Naive thymus-derived CD4-positive, alpha-beta T cell (primary cell): ENCODE measurements at regions of chr9 and their contacts with region 1.

Region 1: DNA sequence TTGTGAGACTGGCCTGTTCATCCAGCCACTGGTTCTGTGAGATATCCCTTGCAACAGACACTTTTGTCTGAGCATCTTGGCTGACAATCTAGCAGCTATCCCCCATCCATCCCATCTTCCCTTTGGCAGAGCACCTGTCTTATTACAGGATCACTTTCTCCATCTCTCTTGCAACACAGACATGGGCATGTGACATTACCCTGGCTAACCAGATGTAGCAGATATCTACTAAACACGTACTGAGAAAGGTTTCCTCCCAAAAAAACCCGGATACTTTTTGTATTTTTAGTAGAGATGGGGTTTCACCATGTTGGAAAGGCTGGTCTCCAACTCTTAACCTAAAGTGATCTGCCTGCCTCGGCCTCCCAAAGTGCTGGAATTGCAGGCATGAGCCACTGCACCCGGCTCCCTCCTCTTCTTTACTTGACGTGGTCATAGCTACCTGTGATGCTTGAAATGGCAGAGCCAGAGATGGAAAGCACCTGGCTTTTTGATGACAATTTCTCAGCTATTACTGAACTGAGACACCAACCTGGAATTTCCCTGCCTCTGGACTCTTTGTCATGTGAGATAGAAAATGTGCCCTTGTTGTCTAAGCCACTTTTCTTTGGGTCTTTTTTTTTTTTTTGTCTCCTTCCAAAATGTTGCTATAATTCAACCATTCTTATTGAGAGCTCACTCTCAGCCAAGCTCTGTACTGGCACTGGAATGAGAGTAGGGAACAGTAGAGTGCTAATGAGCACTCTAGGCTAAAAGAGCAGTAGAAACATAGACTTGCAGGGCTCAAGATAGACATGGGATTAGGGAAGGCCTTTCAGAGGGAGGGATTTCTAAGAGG is 32.6 kb downstream of the FNBP1 start:
- DNase-seq: peak in 3 of 9 donors; percentile 28 to 85 (median 59)
- ATAC-seq: peak; percentile 83
- H3K4me3 ChIP-seq: no peak overlapping the region
- H3K4me3 Mint-ChIP-seq: peak overlapping the region; percentile 15 to 76 (median 42)
- H3K27ac ChIP-seq: peak overlapping the region; percentile 76
- H3K27ac Mint-ChIP-seq: peak overlapping the region; percentile 78 to 96 (median 86)
- H3K4me1 ChIP-seq: peaks cover 33 to 49% of the 10 kb centered on the region in 2 donors
- H3K4me1 Mint-ChIP-seq: peaks cover 55 to 93% (median 72%) of the 10 kb centered on the region in 7 donors
- H3K27me3 ChIP-seq: no peaks in the 10 kb centered on the region
- H3K27me3 Mint-ChIP-seq: no peaks in the 10 kb centered on the region

Region 2: GRCh38 chr9:129962889-129963703 is 47.3 kb before region 1 on chr9:
- CTCF ChIA-PET with region 1: no interaction called
- POLR2A ChIA-PET with region 1: no interaction called
- intact Hi-C with region 1: loop called in 1 of 2 experiments (anchors 1 kb)
- DNase-seq: peak; percentile 23 to 92 (median 87)
- ATAC-seq: peak; percentile 98
- H3K4me3 ChIP-seq: peak overlapping the region; percentile 80
- H3K4me3 Mint-ChIP-seq: peak overlapping the region; percentile 66 to 95 (median 88)
- H3K27ac ChIP-seq: peak overlapping the region; percentile 92
- H3K27ac Mint-ChIP-seq: peak overlapping the region; percentile 89 to 99 (median 97)
- H3K4me1 ChIP-seq: peaks cover 34 to 47% of the 10 kb centered on the region in 2 donors
- H3K4me1 Mint-ChIP-seq: peaks cover 54 to 80% (median 67%) of the 10 kb centered on the region in 7 donors
- H3K27me3 ChIP-seq: no peaks in the 10 kb centered on the region
- H3K27me3 Mint-ChIP-seq: no peaks in the 10 kb centered on the region

Region 3: GRCh38 chr9:129988607-129989361 is 21.6 kb before region 1 on chr9:
- CTCF ChIA-PET with region 1: interaction called, 3 read pairs
- POLR2A ChIA-PET with region 1: interaction called, 4 read pairs
- intact Hi-C with region 1: loop called in 1 of 2 experiments (anchors 2 kb)
- DNase-seq: peak in 4 of 9 donors; percentile 25 to 58 (median 29)
- ATAC-seq: peak; percentile 67
- H3K4me3 ChIP-seq: no peak overlapping the region
- H3K4me3 Mint-ChIP-seq: peak overlapping the region; percentile 18 to 85 (median 48)
- H3K27ac ChIP-seq: peak overlapping the region; percentile 76
- H3K27ac Mint-ChIP-seq: peak overlapping the region; percentile 54 to 98 (median 92)
- H3K4me1 ChIP-seq: peaks cover 43 to 48% of the 10 kb centered on the region in 2 donors
- H3K4me1 Mint-ChIP-seq: peaks cover 44 to 83% (median 73%) of the 10 kb centered on the region in 7 donors
- H3K27me3 ChIP-seq: no peaks in the 10 kb centered on the region
- H3K27me3 Mint-ChIP-seq: no peaks in the 10 kb centered on the region

Region 4: DNA sequence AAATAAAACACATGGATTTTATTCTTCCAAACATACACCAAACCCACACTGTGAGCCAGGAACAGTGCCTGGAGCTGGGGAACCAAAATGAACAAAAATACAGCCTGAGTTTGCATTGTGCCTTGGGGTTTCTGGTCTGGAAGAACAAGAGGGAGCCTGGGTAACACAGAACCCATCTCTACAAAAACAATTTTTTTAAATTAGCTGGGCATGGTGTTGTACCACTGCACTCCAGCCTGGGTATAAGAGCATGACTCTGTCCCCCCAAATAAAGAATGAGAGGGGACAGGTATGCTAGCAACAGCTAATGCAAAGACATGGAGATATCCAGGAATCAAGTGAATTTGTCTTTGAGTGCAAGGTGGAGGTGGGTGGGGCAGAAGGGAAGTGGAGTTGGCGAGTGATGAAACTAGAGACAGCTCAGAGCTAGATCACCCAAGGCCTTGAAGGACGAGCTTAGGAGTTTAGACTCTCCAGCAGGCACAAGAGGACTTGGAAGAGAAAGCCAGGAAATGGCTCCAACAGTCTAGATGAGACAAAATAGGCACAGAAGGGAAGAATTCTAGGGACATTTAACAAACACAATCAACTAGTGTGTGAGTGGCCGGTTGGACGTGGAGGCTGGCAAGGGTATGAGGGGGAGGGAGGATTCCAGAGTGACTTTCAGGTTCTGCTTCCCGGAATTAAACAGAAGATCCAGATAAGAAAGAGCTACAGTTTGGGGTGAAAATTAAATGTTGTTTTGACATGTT is 14.8 kb before region 1 on chr9:
- CTCF ChIA-PET with region 1: no interaction called
- POLR2A ChIA-PET with region 1: interaction called, 6 read pairs
- intact Hi-C with region 1: loop called (anchors 1 to 2 kb)
- DNase-seq: no peak
- ATAC-seq: peak; percentile 67
- H3K4me3 ChIP-seq: no peak overlapping the region
- H3K4me3 Mint-ChIP-seq: peak overlapping the region; percentile 41 to 86 (median 74)
- H3K27ac ChIP-seq: peak overlapping the region; percentile 61
- H3K27ac Mint-ChIP-seq: peak overlapping the region; percentile 89 to 98 (median 94)
- H3K4me1 ChIP-seq: peaks cover 53 to 65% of the 10 kb centered on the region in 2 donors
- H3K4me1 Mint-ChIP-seq: peaks cover 48 to 83% (median 77%) of the 10 kb centered on the region in 7 donors
- H3K27me3 ChIP-seq: no peaks in the 10 kb centered on the region
- H3K27me3 Mint-ChIP-seq: no peaks in the 10 kb centered on the region

Region 5: GRCh38 chr9:130020618-130021017 is 10.2 kb after region 1 on chr9:
- CTCF ChIA-PET with region 1: no interaction called
- POLR2A ChIA-PET with region 1: interaction called, 3 read pairs
- intact Hi-C with region 1: loop called in 1 of 2 experiments (anchors 1 kb)
- DNase-seq: no peak
- ATAC-seq: no peak
- H3K4me3 ChIP-seq: no peak overlapping the region
- H3K4me3 Mint-ChIP-seq: peak overlapping the region in 8 of 10 donors; percentile 3 to 62 (median 40)
- H3K27ac ChIP-seq: no peak overlapping the region
- H3K27ac Mint-ChIP-seq: peak overlapping the region; percentile 36 to 82 (median 79)
- H3K4me1 ChIP-seq: peaks cover 32 to 59% of the 10 kb centered on the region in 2 donors
- H3K4me1 Mint-ChIP-seq: peaks cover 33 to 84% (median 73%) of the 10 kb centered on the region in 7 donors
- H3K27me3 ChIP-seq: no peaks in the 10 kb centered on the region
- H3K27me3 Mint-ChIP-seq: no peaks in the 10 kb centered on the region

Region 6: DNA sequence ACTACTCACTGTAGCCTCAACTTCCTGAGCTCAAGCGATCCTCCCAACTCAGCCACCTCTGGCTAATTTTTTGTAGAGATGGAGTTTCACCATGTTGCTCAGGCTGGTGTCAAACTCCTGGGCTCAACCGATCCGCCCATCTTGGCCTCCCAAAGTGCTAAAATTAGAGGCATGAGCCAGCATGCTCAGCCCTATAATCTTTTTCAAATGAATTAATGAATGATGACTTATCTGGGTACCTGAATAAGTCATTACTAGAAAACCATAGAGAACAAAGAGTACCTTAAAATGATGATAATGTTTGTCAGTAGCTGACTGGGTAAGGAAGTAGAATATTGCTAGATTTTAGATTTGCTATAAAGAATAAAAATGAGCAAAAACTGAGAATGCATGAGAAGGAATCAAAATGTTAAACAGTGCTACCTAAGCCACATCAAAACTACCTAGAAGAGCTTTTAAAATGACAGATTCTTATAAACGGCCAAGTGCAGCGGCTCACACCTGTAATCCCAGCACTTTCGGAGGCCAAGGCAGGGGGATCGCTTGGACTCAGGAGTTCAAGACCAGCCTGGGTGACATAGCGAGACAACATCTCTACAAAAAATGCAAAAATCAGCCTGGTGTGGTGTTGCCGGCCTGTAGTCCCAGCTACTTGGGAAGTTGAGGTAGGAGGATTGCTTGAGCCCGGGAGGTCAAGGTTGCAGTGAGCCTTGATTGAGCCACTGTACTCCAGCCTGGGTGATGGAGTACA is 19.0 kb after region 1 on chr9:
- CTCF ChIA-PET with region 1: no interaction called
- POLR2A ChIA-PET with region 1: interaction called, 8 read pairs
- intact Hi-C with region 1: loop called in 1 of 2 experiments (anchors 2 kb)
- DNase-seq: no peak
- ATAC-seq: no peak
- H3K4me3 ChIP-seq: peak overlapping the region; percentile 21
- H3K4me3 Mint-ChIP-seq: peak overlapping the region; percentile 58 to 89 (median 74)
- H3K27ac ChIP-seq: peak overlapping the region; percentile 63
- H3K27ac Mint-ChIP-seq: peak overlapping the region; percentile 47 to 98 (median 77)
- H3K4me1 ChIP-seq: peaks cover 66 to 93% of the 10 kb centered on the region in 2 donors
- H3K4me1 Mint-ChIP-seq: peaks cover 60 to 95% (median 88%) of the 10 kb centered on the region in 7 donors
- H3K27me3 ChIP-seq: no peaks in the 10 kb centered on the region
- H3K27me3 Mint-ChIP-seq: no peaks in the 10 kb centered on the region